ENCODE measurements at regions of chr3 and their contacts with region 1.

Region 1: DNA sequence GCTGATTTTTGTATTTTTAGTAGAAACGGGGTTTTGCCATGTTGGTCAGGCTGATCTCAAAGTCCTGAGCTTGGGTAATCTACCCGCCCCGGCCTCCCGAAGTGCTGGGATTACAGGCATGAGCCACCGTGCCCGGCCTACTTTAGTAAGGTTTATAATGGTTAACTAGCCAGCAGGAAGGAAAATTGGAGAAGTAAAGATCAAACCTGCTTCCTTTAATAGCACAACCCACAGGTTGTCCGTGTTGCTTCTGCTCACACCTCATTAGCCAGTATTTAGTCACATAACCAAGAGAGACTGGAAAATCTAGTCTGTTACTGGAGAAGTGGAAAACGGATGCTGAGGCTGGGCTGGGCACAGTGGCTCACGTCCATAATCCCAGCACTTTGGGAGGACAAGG is 51.9 kb upstream of the TBL1XR1 start:
- DNase-seq: peak; percentile 37 to 94
- H3K4me3 ChIP-seq: no peak overlapping the region
- H3K27ac ChIP-seq: peak overlapping the region; percentile 62
- H3K4me1 ChIP-seq: peaks cover 18% of the 10 kb centered on the region
- H3K27me3 ChIP-seq: no peaks in the 10 kb centered on the region
- CTCF ChIP-seq: no peak

Region 2: GRCh38 chr3:176950743-176951142 is 298.5 kb before region 1 on chr3:
- CTCF ChIA-PET with region 1: no interaction called
- POLR2A ChIA-PET with region 1: no interaction called
- intact Hi-C with region 1: no loop called
- DNase-seq: peak; percentile 25 to 69
- H3K4me3 ChIP-seq: no peak overlapping the region
- H3K27ac ChIP-seq: peak overlapping the region; percentile 13; the same call in 1 of the 2 replicates
- H3K4me1 ChIP-seq: peaks cover 25% of the 10 kb centered on the region
- H3K27me3 ChIP-seq: no peaks in the 10 kb centered on the region
- CTCF ChIP-seq: no peak

Region 3: DNA sequence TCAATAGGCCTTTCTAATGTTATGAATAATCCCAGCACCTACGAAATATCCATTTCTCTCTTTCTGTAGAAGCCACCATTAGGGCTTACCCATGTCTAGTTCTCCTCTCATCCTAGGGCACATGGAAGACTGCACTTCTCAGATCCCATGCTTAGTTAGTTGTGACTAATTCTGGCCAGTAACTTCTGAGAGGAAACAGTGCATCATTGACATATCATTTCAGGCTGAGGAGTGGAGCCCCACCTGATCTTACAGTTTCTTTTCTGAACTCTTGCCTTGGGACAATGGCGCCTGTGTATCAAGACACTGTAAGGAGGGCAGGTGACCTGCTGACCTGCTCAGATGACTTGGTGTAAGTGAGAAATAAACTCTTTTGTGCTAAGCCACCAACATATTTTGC is 12.5 kb before region 1 on chr3:
- CTCF ChIA-PET with region 1: no interaction called
- POLR2A ChIA-PET with region 1: interaction called, 11 read pairs
- intact Hi-C with region 1: no loop called
- DNase-seq: no peak
- H3K4me3 ChIP-seq: no peak overlapping the region
- H3K27ac ChIP-seq: no peak overlapping the region
- H3K4me1 ChIP-seq: no peaks in the 10 kb centered on the region
- H3K27me3 ChIP-seq: no peaks in the 10 kb centered on the region
- CTCF ChIP-seq: no peak